ENCODE measurements at regions of chr3 and their contacts with region 1.

Region 1: GRCh38 chr3:136250226-136250902 is at the start of gene PCCB:
- DNase-seq: peak; percentile 98
- total RNA-seq, gene PCCB: 22.3 to 23.7 TPM

Region 2: DNA sequence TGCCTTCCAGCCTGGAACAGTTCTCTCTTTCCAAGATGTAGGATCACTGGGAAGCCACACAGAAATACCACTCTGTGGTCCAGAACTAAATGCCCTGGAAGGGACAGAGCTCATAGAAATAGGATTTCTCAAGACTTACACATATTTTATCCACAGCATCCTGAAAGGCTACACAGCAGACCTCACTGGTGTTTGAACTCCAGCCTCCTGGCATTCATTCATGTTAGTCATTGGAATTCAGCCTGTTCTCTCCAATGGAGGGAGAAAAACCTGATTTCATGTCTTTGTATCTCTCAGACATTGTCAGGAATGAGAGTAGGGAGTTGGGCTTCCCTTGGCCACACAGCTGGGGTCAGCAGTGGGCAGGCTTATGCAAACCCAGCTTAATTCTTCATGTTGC is 406.0 kb before region 1 on chr3:
- intact Hi-C with region 1: no loop called
- DNase-seq: no peak

Region 3: DNA sequence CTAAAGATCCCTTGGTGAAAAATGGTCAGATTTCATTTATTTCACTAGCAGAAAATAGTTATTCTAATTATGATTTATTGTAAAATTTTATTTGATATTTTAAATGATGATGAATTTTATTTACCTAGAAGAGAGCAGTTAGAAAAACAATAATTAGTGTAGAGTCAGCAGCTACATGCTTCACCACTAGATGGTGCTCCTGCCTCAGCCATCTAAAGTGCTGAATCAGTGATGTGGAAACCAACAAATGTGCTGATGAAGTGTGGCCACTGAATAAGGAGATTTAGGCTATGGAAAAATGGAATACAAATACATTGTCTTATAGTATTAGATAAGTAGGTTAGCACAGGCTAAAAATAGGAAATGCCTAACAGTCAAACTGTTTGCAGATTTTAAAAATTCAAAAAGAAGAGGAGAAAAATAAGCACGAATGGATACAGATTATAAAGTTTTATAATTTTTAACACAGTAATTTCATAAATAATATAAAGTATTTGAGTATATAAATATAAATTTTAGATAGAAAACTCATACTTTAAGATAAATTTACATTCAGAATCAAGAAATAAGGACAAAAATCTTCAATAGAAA is 175.1 kb before region 1 on chr3:
- intact Hi-C with region 1: loop called in 1 of 2 experiments (anchors 10 kb)
- DNase-seq: no peak

Region 4: GRCh38 chr3:136196401-136197158 is 53.8 kb before region 1 on chr3:
- intact Hi-C with region 1: loop called in 1 of 2 experiments (anchors 10 kb)
- DNase-seq: peak; percentile 100